Transverse colon (tissue), 4 donors: ENCODE measurements at regions of chr17 and their contacts with region 1.

Region 1: DNA sequence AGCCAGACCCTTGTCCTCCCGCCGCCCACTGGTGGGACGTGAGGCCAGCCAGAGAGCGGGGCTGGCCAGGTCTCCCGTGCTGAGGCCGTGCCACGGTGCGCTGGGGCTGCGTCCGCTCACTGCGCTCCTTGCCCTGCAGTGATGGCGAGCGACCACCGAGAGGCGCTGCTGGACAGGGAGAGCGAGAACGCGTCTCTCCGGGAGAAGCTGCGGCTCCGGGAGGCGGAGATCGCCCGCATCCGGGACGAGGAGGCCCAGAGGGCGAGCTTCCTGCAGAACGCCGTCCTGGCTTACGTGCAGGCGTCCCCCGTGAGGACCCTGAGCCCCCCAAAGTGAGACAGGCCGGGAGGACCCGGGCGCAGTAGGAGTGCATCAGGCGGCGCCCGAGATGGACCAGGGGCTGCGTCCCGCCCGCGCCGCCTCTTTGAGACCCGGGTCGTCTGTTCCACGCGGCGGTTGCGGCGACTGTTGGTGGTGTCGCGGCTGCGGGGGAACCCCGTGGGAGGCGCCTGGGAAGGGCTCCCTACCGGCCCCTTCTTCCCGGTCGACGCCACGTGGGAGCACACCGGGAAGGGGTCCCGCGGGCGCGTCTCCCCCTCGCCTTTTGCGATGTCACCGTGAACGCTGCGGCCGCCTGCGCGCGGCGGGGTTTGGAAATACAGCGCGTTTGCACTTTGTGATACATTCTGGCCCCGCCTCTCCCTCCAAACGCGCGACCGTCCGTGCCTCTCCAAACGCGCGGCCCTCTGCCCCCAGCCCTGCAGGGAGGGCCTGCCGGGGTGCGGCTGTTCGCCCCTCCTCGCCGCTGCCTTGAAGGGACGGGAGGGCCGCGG is 792 bp upstream of the RAC3 start:
- DNase-seq: peak; percentile 91
- H3K4me3 ChIP-seq: peak overlapping the region; percentile 18 to 61 (median 49)
- H3K27ac ChIP-seq: peak overlapping the region; percentile 72 to 90 (median 81)
- H3K4me1 ChIP-seq: peaks cover 4 to 20% (median 17%) of the 10 kb centered on the region in 4 donors
- H3K27me3 ChIP-seq: peaks cover 9% of the 10 kb centered on the region
- CTCF ChIP-seq: peak; percentile 92 to 97 (median 95)
- EP300 ChIP-seq: no peak
- POLR2A ChIP-seq: peak; percentile 46

Region 2: DNA sequence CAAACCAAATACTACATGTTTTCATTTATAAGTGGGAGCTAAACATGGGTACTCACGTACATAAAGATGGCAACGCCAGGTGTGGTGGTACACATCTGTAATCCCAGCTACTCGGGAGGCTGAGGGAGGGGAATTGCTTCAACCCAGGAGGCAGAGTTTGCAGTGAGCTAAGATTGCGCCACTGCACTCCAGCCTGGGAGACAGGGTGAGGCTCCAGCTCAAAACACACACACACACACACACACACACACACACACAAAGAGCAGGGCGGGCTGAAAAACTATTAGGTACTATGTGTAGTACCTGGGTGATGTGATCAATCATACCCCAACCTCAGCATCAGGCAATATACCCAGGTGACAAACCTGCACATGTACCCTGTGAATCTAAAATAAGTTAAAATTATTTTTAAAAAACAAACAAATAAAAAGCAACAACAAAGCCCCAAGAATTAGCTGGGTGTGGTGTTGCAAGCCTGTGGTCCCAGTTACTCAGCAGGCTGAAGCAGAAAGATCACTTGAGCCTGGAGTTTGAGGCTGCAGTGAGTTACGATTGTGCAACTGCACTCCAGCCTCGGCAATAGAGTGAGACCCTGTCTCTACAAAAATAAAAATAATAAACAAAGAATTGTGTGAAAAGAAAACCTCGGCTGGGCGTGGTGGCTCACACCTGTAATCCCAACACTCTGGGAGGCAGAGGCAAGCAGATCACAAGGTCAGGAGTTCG is 466.7 kb before region 1 on chr17:
- in situ Hi-C with region 1: no loop called
- intact Hi-C with region 1: loop called (anchors 5 kb)
- DNase-seq: no peak
- H3K4me3 ChIP-seq: no peak overlapping the region
- H3K27ac ChIP-seq: peak overlapping the region in 1 of 4 donors; percentile 30
- H3K4me1 ChIP-seq: peaks cover 21 to 36% (median 31%) of the 10 kb centered on the region in 4 donors
- H3K27me3 ChIP-seq: no peaks in the 10 kb centered on the region
- CTCF ChIP-seq: no peak
- EP300 ChIP-seq: no peak
- POLR2A ChIP-seq: no peak

Region 3: GRCh38 chr17:82077617-82078358 is 47.1 kb after region 1 on chr17:
- in situ Hi-C with region 1: no loop called
- intact Hi-C with region 1: no loop called
- DNase-seq: no peak
- H3K4me3 ChIP-seq: no peak overlapping the region
- H3K27ac ChIP-seq: no peak overlapping the region
- H3K4me1 ChIP-seq: peaks cover 0 to 6% (median 0%) of the 10 kb centered on the region in 4 donors
- H3K27me3 ChIP-seq: no peaks in the 10 kb centered on the region
- CTCF ChIP-seq: no peak
- EP300 ChIP-seq: no peak
- POLR2A ChIP-seq: no peak

Region 4: GRCh38 chr17:82407255-82407654 is 376.6 kb after region 1 on chr17:
- in situ Hi-C with region 1: no loop called
- intact Hi-C with region 1: no loop called
- DNase-seq: no peak
- H3K4me3 ChIP-seq: no peak overlapping the region
- H3K27ac ChIP-seq: no peak overlapping the region
- H3K4me1 ChIP-seq: no peaks in the 10 kb centered on the region
- H3K27me3 ChIP-seq: no peaks in the 10 kb centered on the region
- CTCF ChIP-seq: no peak
- EP300 ChIP-seq: no peak
- POLR2A ChIP-seq: no peak

Region 5: GRCh38 chr17:82791532-82791931 is 760.8 kb after region 1 on chr17:
- in situ Hi-C with region 1: no loop called
- intact Hi-C with region 1: no loop called
- DNase-seq: no peak
- H3K4me3 ChIP-seq: no peak overlapping the region
- H3K27ac ChIP-seq: no peak overlapping the region
- H3K4me1 ChIP-seq: peaks cover 6 to 25% (median 8%) of the 10 kb centered on the region in 4 donors
- H3K27me3 ChIP-seq: no peaks in the 10 kb centered on the region
- CTCF ChIP-seq: no peak
- EP300 ChIP-seq: no peak
- POLR2A ChIP-seq: no peak